ENCODE measurements at regions of chr2 and their contacts with region 1.

Region 1: DNA sequence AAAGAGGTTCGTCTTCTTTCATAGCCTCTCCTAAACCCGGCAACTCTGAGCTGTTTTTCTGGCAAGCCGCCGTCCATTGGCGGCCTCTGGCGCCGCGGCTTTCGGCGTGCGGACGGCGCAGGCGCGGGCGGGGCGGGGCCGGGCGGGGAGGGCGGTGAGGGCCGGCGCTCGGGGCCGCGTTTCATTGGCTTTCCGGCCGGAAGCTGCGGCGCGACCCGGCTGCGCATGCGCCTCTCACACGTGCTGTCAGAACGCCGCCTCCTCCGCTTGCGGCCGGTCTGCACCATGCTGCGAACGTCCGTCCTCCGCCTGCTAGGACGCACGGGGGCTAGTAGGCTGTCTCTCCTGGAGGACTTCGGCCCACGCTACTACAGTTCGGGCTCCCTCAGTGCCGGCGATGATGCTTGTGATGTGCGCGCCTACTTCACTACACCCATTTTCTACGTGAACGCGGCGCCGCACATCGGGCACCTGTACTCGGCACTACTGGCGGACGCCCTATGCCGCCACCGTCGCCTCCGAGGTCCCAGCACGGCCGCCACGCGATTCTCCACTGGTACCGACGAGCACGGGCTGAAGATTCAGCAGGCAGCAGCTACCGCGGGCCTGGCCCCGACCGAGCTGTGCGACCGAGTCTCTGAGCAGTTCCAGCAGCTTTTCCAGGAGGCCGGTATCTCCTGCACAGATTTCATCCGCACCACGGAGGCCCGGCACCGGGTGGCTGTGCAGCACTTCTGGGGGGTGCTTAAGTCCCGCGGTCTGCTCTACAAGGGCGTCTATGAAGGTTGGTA is at the start of gene MARS2:
- DNase-seq: peak; percentile 91 to 94 (median 92)
- H3K4me3 ChIP-seq: peak within 1 kb of the TSS; percentile 89 to 93
- H3K4me3 Mint-ChIP-seq: peak within 1 kb of the TSS; percentile 84 to 94 (median 90)
- H3K27ac ChIP-seq: peak within 1 kb of the TSS; percentile 77
- H3K27ac Mint-ChIP-seq: peak within 1 kb of the TSS; percentile 84 to 98 (median 95)
- H3K4me1 ChIP-seq: peaks cover 51% of the 10 kb centered on the region
- H3K4me1 Mint-ChIP-seq: peaks cover 23 to 54% (median 41%) of the 10 kb centered on the region in 4 donors
- H3K27me3 ChIP-seq: no peaks in the 10 kb centered on the region
- H3K27me3 Mint-ChIP-seq: peaks cover 3 to 5% of the 10 kb centered on the region in 2 donors
- total RNA-seq, gene MARS2: 12.1 to 12.3 TPM

Region 2: GRCh38 chr2:196639180-196640030 is 1065.9 kb before region 1 on chr2 and contains the start of gene CCDC150:
- CTCF ChIA-PET with region 1: interaction called, 3 read pairs
- POLR2A ChIA-PET with region 1: no interaction called
- intact Hi-C with region 1: loop called (anchors 1 kb)
- DNase-seq: peak; percentile 92 to 94 (median 94)
- H3K4me3 ChIP-seq: peak within 1 kb of the TSS; percentile 69 to 79
- H3K4me3 Mint-ChIP-seq: peak within 1 kb of the TSS; percentile 83 to 93 (median 90)
- H3K27ac ChIP-seq: peak within 1 kb of the TSS; percentile 39
- H3K27ac Mint-ChIP-seq: peak within 1 kb of the TSS; percentile 39 to 87 (median 72)
- H3K4me1 ChIP-seq: peaks cover 9% of the 10 kb centered on the region
- H3K4me1 Mint-ChIP-seq: peaks cover 8 to 20% (median 13%) of the 10 kb centered on the region in 4 donors
- H3K27me3 ChIP-seq: no peaks in the 10 kb centered on the region
- H3K27me3 Mint-ChIP-seq: peaks cover 0 to 4% of the 10 kb centered on the region in 2 donors
- total RNA-seq, gene CCDC150: 0.44 to 0.87 TPM

Region 3: DNA sequence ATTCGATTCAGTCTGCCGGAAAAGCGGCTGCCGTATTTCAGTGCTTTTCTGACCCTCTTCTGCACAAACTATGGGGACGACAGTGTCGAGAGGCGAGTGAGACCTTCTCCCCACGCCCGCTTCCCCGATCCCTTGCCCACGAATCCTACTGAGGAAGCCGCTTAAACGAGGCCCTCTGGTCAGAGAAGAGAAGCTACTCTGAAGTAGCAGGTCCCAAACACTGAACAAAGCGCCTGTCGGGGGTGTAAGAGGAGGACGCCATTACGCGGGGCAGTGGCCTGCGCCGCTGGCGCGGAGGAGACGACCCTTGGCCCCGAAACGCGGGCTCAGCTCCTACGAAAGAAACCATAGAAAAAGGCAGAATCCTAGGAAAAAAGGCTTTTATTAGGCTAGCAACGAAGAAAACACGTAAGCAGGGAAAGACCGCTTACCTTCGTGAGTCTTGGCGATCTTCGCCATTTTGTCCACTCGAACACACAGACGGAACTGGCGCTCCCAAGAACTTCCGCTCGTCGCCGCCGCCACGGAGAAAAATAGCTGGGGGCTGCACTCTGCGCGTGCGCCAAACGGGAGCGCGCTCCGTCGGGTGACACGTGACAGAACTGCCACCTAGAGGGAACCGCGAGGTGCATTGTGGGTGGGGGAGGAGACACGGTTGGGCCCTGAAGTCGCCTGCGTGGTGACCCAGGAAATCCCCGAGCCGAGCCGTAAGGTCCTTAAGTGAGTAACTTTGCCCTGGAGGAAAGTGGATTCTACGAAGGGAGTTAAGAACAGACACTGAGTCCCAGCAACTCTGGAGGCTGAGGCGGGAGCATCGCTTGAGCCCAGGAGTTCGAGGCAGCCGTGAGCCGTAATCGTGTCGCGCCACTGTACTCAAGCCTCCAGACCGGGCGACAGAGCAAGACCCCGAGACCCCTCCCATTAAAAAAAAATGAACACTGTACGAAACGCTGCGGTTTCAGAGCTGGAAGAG is 270.5 kb before region 1 on chr2 and contains the start of gene SF3B1:
- CTCF ChIA-PET with region 1: no interaction called
- POLR2A ChIA-PET with region 1: interaction called, 18 read pairs
- intact Hi-C with region 1: loop called (anchors 1 kb)
- DNase-seq: peak; percentile 99 to 100 (median 99)
- H3K4me3 ChIP-seq: peak within 1 kb of the TSS; percentile 89 to 95
- H3K4me3 Mint-ChIP-seq: peak within 1 kb of the TSS; percentile 98 to 100 (median 100)
- H3K27ac ChIP-seq: peak within 1 kb of the TSS; percentile 99
- H3K27ac Mint-ChIP-seq: peak within 1 kb of the TSS; percentile 99 to 100 (median 100)
- H3K4me1 ChIP-seq: peaks cover 51% of the 10 kb centered on the region
- H3K4me1 Mint-ChIP-seq: peaks cover 36 to 65% (median 49%) of the 10 kb centered on the region in 4 donors
- H3K27me3 ChIP-seq: no peaks in the 10 kb centered on the region
- H3K27me3 Mint-ChIP-seq: no peaks in the 10 kb centered on the region
- total RNA-seq, gene SF3B1: 601 to 604 TPM

Region 4: GRCh38 chr2:197453161-197453914 is 252.0 kb before region 1 on chr2 and contains the start of gene COQ10B:
- CTCF ChIA-PET with region 1: interaction called, 3 read pairs
- POLR2A ChIA-PET with region 1: interaction called, 16 read pairs
- intact Hi-C with region 1: loop called (anchors 1 kb)
- DNase-seq: peak; percentile 97 to 99 (median 99)
- H3K4me3 ChIP-seq: peak within 1 kb of the TSS; percentile 87 to 88
- H3K4me3 Mint-ChIP-seq: peak within 1 kb of the TSS; percentile 96 to 100 (median 99)
- H3K27ac ChIP-seq: peak within 1 kb of the TSS; percentile 99
- H3K27ac Mint-ChIP-seq: peak within 1 kb of the TSS; percentile 99 to 100 (median 100)
- H3K4me1 ChIP-seq: peaks cover 36% of the 10 kb centered on the region
- H3K4me1 Mint-ChIP-seq: peaks cover 28 to 65% (median 41%) of the 10 kb centered on the region in 4 donors
- H3K27me3 ChIP-seq: no peaks in the 10 kb centered on the region
- H3K27me3 Mint-ChIP-seq: peaks cover 2 to 3% of the 10 kb centered on the region in 2 donors
- total RNA-seq, gene COQ10B: 31.7 to 33.1 TPM

Region 5: GRCh38 chr2:197515739-197516392 is 189.4 kb before region 1 on chr2 and contains the start of gene MOB4:
- CTCF ChIA-PET with region 1: no interaction called
- POLR2A ChIA-PET with region 1: interaction called, 26 read pairs
- intact Hi-C with region 1: loop called (anchors 2 kb)
- DNase-seq: peak; percentile 92 to 94 (median 93)
- H3K4me3 ChIP-seq: peak within 1 kb of the TSS; percentile 88 to 93
- H3K4me3 Mint-ChIP-seq: peak within 1 kb of the TSS; percentile 86 to 99 (median 94)
- H3K27ac ChIP-seq: peak within 1 kb of the TSS; percentile 95
- H3K27ac Mint-ChIP-seq: peak within 1 kb of the TSS; percentile 92 to 98 (median 97)
- H3K4me1 ChIP-seq: peaks cover 33% of the 10 kb centered on the region
- H3K4me1 Mint-ChIP-seq: peaks cover 18 to 59% (median 33%) of the 10 kb centered on the region in 4 donors
- H3K27me3 ChIP-seq: no peaks in the 10 kb centered on the region
- H3K27me3 Mint-ChIP-seq: no peaks in the 10 kb centered on the region
- total RNA-seq, gene MOB4: 20.2 to 21.8 TPM

Region 6: GRCh38 chr2:197777823-197778407 is 72.6 kb after region 1 on chr2:
- CTCF ChIA-PET with region 1: interaction called, 11 read pairs
- POLR2A ChIA-PET with region 1: interaction called, 4 read pairs
- intact Hi-C with region 1: loop called (anchors 1 kb)
- DNase-seq: peak in 4 of 5 donors; percentile 32 to 46 (median 40)
- H3K4me3 ChIP-seq: no peak overlapping the region
- H3K4me3 Mint-ChIP-seq: no peak overlapping the region
- H3K27ac ChIP-seq: no peak overlapping the region
- H3K27ac Mint-ChIP-seq: no peak overlapping the region
- H3K4me1 ChIP-seq: no peaks in the 10 kb centered on the region
- H3K4me1 Mint-ChIP-seq: peaks cover 0 to 2% (median 0%) of the 10 kb centered on the region in 4 donors
- H3K27me3 ChIP-seq: no peaks in the 10 kb centered on the region
- H3K27me3 Mint-ChIP-seq: peaks cover 4 to 5% of the 10 kb centered on the region in 2 donors

Region 7: GRCh38 chr2:197838036-197838435 is 132.7 kb after region 1 on chr2:
- CTCF ChIA-PET with region 1: no interaction called
- POLR2A ChIA-PET with region 1: no interaction called
- intact Hi-C with region 1: no loop called
- DNase-seq: peak; percentile 36 to 54 (median 39)
- H3K4me3 ChIP-seq: no peak overlapping the region
- H3K4me3 Mint-ChIP-seq: peak overlapping the region; percentile 70 to 92 (median 78)
- H3K27ac ChIP-seq: peak overlapping the region; percentile 50
- H3K27ac Mint-ChIP-seq: peak overlapping the region; percentile 87 to 94 (median 92)
- H3K4me1 ChIP-seq: peaks cover 45% of the 10 kb centered on the region
- H3K4me1 Mint-ChIP-seq: peaks cover 32 to 56% (median 48%) of the 10 kb centered on the region in 4 donors
- H3K27me3 ChIP-seq: no peaks in the 10 kb centered on the region
- H3K27me3 Mint-ChIP-seq: no peaks in the 10 kb centered on the region

Region 8: DNA sequence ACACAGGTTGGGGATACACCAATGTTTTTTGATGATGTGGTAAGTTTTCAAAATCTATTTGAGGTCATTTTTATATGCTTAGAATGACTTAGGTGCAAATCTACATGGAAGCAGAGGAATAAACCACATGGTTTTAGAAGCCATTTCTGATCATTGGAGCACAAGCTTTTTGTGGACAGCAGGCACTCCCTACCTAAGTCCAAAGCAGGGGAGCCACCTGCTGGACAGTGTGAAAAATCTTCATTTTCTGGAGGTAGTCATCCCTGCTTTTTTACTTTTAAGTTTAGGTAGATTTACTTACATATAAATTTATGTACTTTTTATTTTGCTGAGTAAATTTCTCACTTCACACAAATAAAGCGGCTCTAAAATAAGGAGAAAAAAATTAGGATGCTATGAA is 422.3 kb after region 1 on chr2:
- CTCF ChIA-PET with region 1: no interaction called
- POLR2A ChIA-PET with region 1: no interaction called
- intact Hi-C with region 1: loop called (anchors 1 kb)
- DNase-seq: peak in 4 of 5 donors; percentile 37 to 49 (median 42)
- H3K4me3 ChIP-seq: no peak overlapping the region
- H3K4me3 Mint-ChIP-seq: no peak overlapping the region
- H3K27ac ChIP-seq: no peak overlapping the region
- H3K27ac Mint-ChIP-seq: no peak overlapping the region
- H3K4me1 ChIP-seq: no peaks in the 10 kb centered on the region
- H3K4me1 Mint-ChIP-seq: peaks cover 0 to 1% (median under 1%) of the 10 kb centered on the region in 4 donors
- H3K27me3 ChIP-seq: no peaks in the 10 kb centered on the region
- H3K27me3 Mint-ChIP-seq: peaks cover 0 to 1% of the 10 kb centered on the region in 2 donors

Measured in CD4-positive, alpha-beta memory T cell (primary cell).